Activated CD4-positive, alpha-beta memory T cell treated with anti-CD3 and anti-CD28 coated beads for 36 hours (primary cell): ENCODE measurements at regions of chr17 and their contacts with region 1.

Region 1: GRCh38 chr17:76816590-76817135 is 51.5 kb upstream of the MGAT5B start:
- DNase-seq: peak; percentile 73
- H3K4me3 Mint-ChIP-seq: no peak overlapping the region
- H3K27ac Mint-ChIP-seq: no peak overlapping the region
- H3K4me1 Mint-ChIP-seq: peaks cover 7% of the 10 kb centered on the region
- H3K27me3 Mint-ChIP-seq: peaks cover 3% of the 10 kb centered on the region

Region 2: DNA sequence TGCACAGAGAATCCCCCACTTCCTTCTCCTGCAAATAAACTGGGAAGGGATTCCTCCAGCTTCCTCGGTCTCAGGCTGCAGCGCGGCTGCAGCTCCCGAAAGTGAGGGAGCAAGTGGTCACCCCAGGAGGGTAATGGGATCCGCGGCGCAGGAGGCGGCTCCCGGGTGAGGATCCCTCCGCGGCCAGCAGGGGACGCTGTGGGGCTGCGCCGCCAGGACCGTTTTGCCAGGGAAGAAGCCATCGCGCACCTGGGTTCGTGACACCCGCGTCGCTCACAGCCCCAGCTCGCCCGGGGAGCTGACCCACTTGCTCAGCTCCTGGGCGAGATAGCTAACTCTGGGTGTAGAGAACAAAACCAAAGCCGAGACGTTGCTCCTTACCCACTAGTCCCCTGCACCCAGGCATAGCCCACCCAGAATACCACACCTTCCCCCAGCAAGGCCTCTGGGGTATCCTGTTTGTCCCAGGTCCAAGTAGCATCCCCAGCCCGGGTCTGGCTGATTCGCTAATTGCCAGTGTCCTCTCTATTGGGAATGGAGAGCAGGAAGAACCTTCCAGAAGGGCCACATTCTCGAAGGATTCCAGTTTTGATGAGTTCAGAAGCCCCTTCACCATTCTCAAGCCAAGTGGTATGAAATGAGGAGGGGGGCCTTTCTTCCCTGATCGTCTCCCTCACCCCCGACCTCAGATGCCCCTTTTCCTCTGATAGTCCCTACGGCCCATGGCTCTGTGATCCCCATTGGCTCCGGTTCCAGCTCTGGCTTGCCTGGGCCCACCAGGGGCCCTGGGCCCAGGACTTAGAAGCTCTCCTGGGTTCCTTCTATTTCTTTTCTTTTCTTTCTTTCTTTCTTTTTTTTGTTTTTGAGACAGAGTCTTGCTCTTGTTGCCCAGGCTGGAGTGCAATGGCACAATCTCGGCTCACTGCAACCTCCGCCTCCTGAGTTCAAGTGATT is 293.3 kb before region 1 on chr17:
- CTCF ChIA-PET with region 1: no interaction called
- POLR2A ChIA-PET with region 1: no interaction called
- intact Hi-C with region 1: no loop called
- DNase-seq: peak; percentile 88
- H3K4me3 Mint-ChIP-seq: no peak overlapping the region
- H3K27ac Mint-ChIP-seq: no peak overlapping the region
- H3K4me1 Mint-ChIP-seq: peaks cover 17% of the 10 kb centered on the region
- H3K27me3 Mint-ChIP-seq: peaks cover 2% of the 10 kb centered on the region

Region 3: DNA sequence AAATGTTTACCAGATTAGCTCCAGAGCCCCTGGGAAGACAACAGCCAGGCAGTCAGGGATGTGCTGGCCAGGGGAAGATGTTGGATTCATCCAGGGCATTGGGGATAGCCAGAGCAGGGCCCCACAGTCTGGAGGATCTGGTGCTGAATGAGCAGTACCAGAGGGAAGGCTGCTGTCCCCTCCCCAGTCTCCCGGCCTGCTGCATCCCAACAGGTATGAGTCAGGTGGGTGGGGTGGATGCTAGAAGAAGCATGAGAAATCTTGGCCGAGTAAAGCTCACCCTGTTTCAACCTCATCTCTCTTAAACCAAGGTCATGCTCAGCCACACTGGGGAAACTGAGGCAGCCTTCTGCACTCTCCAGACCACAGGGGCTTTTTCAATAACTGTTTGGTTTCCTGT is 252.3 kb after region 1 on chr17:
- CTCF ChIA-PET with region 1: interaction called, 3 read pairs
- POLR2A ChIA-PET with region 1: interaction called, 3 read pairs
- intact Hi-C with region 1: loop called (anchors 5 kb)
- DNase-seq: no peak
- H3K4me3 Mint-ChIP-seq: no peak overlapping the region
- H3K27ac Mint-ChIP-seq: no peak overlapping the region
- H3K4me1 Mint-ChIP-seq: no peaks in the 10 kb centered on the region
- H3K27me3 Mint-ChIP-seq: peaks cover 24% of the 10 kb centered on the region